PC-9 (cell line): ENCODE measurements at regions of chr12 and their contacts with region 1.

Region 1: GRCh38 chr12:12890815-12891645 is at the start of gene GPRC5A:
- DNase-seq: peak; percentile 96 to 100
- H3K4me3 ChIP-seq: peak within 1 kb of the TSS; percentile 86
- H3K27ac ChIP-seq: peak within 1 kb of the TSS; percentile 93
- H3K4me1 ChIP-seq: peaks cover 44% of the 10 kb centered on the region
- H3K27me3 ChIP-seq: no peaks in the 10 kb centered on the region
- CTCF ChIP-seq: no peak; the same call in 1 of the 2 replicates
- total RNA-seq, gene GPRC5A: 468 and 642 TPM in 2 replicates

Region 2: GRCh38 chr12:12786716-12787601 is 104.1 kb before region 1 on chr12:
- CTCF ChIA-PET with region 1: interaction called, 9 read pairs
- POLR2A ChIA-PET with region 1: interaction called, 6 read pairs
- intact Hi-C with region 1: loop called (anchors 1 kb)
- DNase-seq: peak; percentile 57 to 83
- H3K4me3 ChIP-seq: peak overlapping the region; percentile 61; the same call in 1 of the 2 replicates
- H3K27ac ChIP-seq: peak overlapping the region; percentile 76
- H3K4me1 ChIP-seq: peaks cover 44% of the 10 kb centered on the region
- H3K27me3 ChIP-seq: no peaks in the 10 kb centered on the region
- CTCF ChIP-seq: no peak

Region 3: GRCh38 chr12:12819671-12820311 is 71.2 kb before region 1 on chr12:
- CTCF ChIA-PET with region 1: interaction called, 4 read pairs
- POLR2A ChIA-PET with region 1: interaction called, 42 read pairs
- intact Hi-C with region 1: loop called (anchors 1 kb)
- DNase-seq: peak; percentile 86 to 99
- H3K4me3 ChIP-seq: peak overlapping the region; percentile 29
- H3K27ac ChIP-seq: peak overlapping the region; percentile 94
- H3K4me1 ChIP-seq: peaks cover 100% of the 10 kb centered on the region
- H3K27me3 ChIP-seq: no peaks in the 10 kb centered on the region
- CTCF ChIP-seq: no peak

Region 4: GRCh38 chr12:12845025-12845787 is 45.8 kb before region 1 on chr12:
- CTCF ChIA-PET with region 1: no interaction called
- POLR2A ChIA-PET with region 1: interaction called, 28 read pairs
- intact Hi-C with region 1: loop called (anchors 1 kb)
- DNase-seq: peak in 1 of 2 experiments; percentile 41
- H3K4me3 ChIP-seq: no peak overlapping the region
- H3K27ac ChIP-seq: peak overlapping the region; percentile 28; the same call in 1 of the 2 replicates
- H3K4me1 ChIP-seq: peaks cover 35% of the 10 kb centered on the region
- H3K27me3 ChIP-seq: no peaks in the 10 kb centered on the region
- CTCF ChIP-seq: no peak

Region 5: DNA sequence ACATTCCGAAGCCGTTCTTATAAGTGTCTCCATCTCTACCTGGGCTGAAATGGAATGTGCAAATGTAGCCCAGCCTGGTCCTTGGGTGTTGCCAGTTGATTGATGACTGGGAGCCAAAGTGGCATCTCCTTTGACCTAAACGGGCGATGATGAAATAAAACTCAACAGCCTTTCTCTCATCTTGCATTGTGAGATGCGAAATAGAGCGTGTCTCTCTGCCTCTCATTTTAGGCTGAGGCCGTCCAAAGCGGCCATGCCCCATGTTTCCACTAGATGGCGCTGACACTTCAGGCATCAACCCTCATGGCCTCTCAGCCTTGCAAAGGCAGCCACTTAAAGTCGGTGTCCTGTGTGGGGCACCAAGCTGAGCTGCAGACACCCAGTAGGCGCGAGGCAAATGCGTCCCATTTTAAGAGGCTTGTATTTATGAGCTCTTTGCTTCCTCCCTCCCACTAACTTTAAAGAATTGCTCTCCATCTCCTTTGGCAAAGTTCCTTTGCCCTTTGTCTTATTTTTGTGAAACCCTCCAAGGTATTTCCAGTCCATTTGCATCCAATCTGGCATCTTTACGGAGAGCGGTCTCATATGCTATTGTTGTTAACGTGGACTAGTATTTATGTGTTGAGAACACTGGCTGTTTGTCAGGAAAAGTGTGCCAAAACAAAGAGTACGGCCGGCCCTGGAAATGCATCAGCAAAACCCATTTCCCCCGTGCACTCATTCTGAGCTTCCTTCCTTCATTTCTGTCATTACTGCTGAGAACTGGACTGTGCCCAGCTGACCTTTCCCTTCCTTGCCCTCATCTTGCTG is 25.3 kb after region 1 on chr12:
- CTCF ChIA-PET with region 1: interaction called, 17 read pairs
- POLR2A ChIA-PET with region 1: interaction called, 5 read pairs
- intact Hi-C with region 1: no loop called
- DNase-seq: peak; percentile 55 to 82
- H3K4me3 ChIP-seq: no peak overlapping the region
- H3K27ac ChIP-seq: no peak overlapping the region
- H3K4me1 ChIP-seq: 0 out of 2 replicates have a peak, but pooled peaks cover 5% of the 10 kb centered on the region
- H3K27me3 ChIP-seq: no peaks in the 10 kb centered on the region
- CTCF ChIP-seq: peak; percentile 95

Region 6: GRCh38 chr12:14537088-14537487 is 1646.1 kb after region 1 on chr12:
- CTCF ChIA-PET with region 1: no interaction called
- POLR2A ChIA-PET with region 1: no interaction called
- intact Hi-C with region 1: no loop called
- DNase-seq: no peak
- H3K4me3 ChIP-seq: no peak overlapping the region
- H3K27ac ChIP-seq: no peak overlapping the region
- H3K4me1 ChIP-seq: no peaks in the 10 kb centered on the region; the same call in 1 of the 2 replicates
- H3K27me3 ChIP-seq: no peaks in the 10 kb centered on the region
- CTCF ChIP-seq: no peak